CD4-positive, alpha-beta T cell (primary cell): ENCODE measurements at regions of chr11 and their contacts with region 1.

Region 1: GRCh38 chr11:111283945-111284481 is 14.3 kb upstream of the POU2AF3 start:
- DNase-seq: no peak
- ATAC-seq: no peak
- H3K4me3 ChIP-seq: no peak overlapping the region
- H3K4me3 Mint-ChIP-seq: no peak overlapping the region
- H3K27ac ChIP-seq: no peak overlapping the region
- H3K27ac Mint-ChIP-seq: no peak overlapping the region
- H3K4me1 ChIP-seq: no peaks in the 10 kb centered on the region
- H3K4me1 Mint-ChIP-seq: no peaks in the 10 kb centered on the region
- H3K27me3 ChIP-seq: no peaks in the 10 kb centered on the region
- H3K27me3 Mint-ChIP-seq: no peaks in the 10 kb centered on the region
- CTCF ChIP-seq: no peak

Region 2: GRCh38 chr11:110407315-110407714 is 876.7 kb before region 1 on chr11:
- CTCF ChIA-PET with region 1: no interaction called
- POLR2A ChIA-PET with region 1: no interaction called
- intact Hi-C with region 1: no loop called
- DNase-seq: no peak
- ATAC-seq: no peak
- H3K4me3 ChIP-seq: no peak overlapping the region
- H3K4me3 Mint-ChIP-seq: no peak overlapping the region
- H3K27ac ChIP-seq: no peak overlapping the region
- H3K27ac Mint-ChIP-seq: no peak overlapping the region
- H3K4me1 ChIP-seq: no peaks in the 10 kb centered on the region
- H3K4me1 Mint-ChIP-seq: no peaks in the 10 kb centered on the region
- H3K27me3 ChIP-seq: no peaks in the 10 kb centered on the region
- H3K27me3 Mint-ChIP-seq: no peaks in the 10 kb centered on the region
- CTCF ChIP-seq: no peak

Region 3: DNA sequence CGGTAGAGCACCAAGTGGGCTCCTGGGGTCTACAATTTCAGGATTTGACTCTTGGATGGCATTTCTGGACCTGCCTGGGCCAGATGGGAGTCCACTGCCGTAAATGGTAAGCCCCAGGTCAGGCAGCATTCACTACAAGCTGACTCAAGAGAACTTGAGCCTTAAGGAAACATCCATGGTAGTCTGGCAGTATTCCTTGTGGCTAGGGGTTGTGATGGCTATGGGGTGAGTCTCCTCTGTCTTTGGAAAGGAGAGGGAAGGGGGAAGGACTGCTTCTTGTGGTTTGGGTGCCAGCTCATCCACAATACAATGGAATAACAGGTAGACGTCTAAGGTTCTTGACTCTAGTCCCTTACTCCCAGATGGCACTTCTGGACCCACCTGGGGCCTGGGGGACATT is 70.8 kb before region 1 on chr11:
- CTCF ChIA-PET with region 1: no interaction called
- POLR2A ChIA-PET with region 1: no interaction called
- intact Hi-C with region 1: no loop called
- DNase-seq: no peak
- ATAC-seq: no peak
- H3K4me3 ChIP-seq: no peak overlapping the region
- H3K4me3 Mint-ChIP-seq: no peak overlapping the region
- H3K27ac ChIP-seq: no peak overlapping the region
- H3K27ac Mint-ChIP-seq: no peak overlapping the region
- H3K4me1 ChIP-seq: no peaks in the 10 kb centered on the region
- H3K4me1 Mint-ChIP-seq: no peaks in the 10 kb centered on the region
- H3K27me3 ChIP-seq: no peaks in the 10 kb centered on the region
- H3K27me3 Mint-ChIP-seq: peaks cover 11% of the 10 kb centered on the region
- CTCF ChIP-seq: no peak

Region 4: GRCh38 chr11:111246956-111247355 is 37.1 kb before region 1 on chr11:
- CTCF ChIA-PET with region 1: no interaction called
- POLR2A ChIA-PET with region 1: no interaction called
- intact Hi-C with region 1: no loop called
- DNase-seq: no peak
- ATAC-seq: no peak
- H3K4me3 ChIP-seq: no peak overlapping the region
- H3K4me3 Mint-ChIP-seq: no peak overlapping the region
- H3K27ac ChIP-seq: no peak overlapping the region
- H3K27ac Mint-ChIP-seq: no peak overlapping the region
- H3K4me1 ChIP-seq: no peaks in the 10 kb centered on the region
- H3K4me1 Mint-ChIP-seq: no peaks in the 10 kb centered on the region
- H3K27me3 ChIP-seq: peaks cover 5 to 6% of the 10 kb centered on the region in 2 experiments
- H3K27me3 Mint-ChIP-seq: peaks cover 30% of the 10 kb centered on the region
- CTCF ChIP-seq: no peak

Region 5: DNA sequence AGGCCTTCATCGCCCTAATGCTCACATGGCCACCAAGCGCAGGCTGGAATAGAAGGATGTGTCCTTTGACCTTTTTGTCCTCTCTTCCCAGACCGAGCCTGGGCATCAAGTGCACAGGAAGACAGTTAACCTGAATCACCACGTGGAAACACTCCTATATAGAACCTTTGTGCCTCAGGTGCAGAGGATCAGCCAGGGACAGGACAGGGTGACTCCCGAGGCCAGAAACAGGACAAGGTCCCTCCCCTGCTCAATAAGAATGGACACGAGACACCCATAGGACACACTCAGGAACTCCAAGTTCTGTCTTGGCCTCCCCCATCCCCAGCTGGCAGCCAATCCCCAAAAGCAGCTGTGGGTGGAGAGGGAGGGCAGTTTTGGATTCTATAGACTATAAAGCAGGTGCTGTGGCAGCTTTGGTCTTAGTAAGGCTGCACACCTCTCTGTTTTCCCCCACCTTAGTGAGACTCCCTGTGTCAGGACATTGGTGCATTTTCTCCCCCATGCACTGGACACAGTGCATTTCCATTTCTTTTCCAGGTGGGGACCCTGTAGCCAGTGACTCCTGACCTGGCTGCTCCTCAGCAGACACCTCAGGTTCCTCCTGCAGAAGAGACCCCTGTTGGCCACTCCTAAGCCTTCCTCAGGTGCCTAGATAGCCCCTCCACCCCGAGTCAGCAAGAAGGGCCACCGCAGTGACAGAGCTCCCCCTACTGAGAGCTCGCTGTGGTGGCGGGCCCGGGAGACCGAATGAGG is 138.7 kb after region 1 on chr11:
- CTCF ChIA-PET with region 1: interaction called, 9 read pairs
- POLR2A ChIA-PET with region 1: no interaction called
- intact Hi-C with region 1: loop called (anchors 1 kb)
- DNase-seq: peak; percentile 10 to 59 (median 30)
- ATAC-seq: peak; percentile 64
- H3K4me3 ChIP-seq: no peak overlapping the region
- H3K4me3 Mint-ChIP-seq: no peak overlapping the region
- H3K27ac ChIP-seq: no peak overlapping the region
- H3K27ac Mint-ChIP-seq: no peak overlapping the region
- H3K4me1 ChIP-seq: peaks cover 3% of the 10 kb centered on the region
- H3K4me1 Mint-ChIP-seq: peaks cover 6% of the 10 kb centered on the region
- H3K27me3 ChIP-seq: no peaks in the 10 kb centered on the region
- H3K27me3 Mint-ChIP-seq: no peaks in the 10 kb centered on the region
- CTCF ChIP-seq: peak; percentile 66

Region 6: GRCh38 chr11:111429066-111429506 is 145.1 kb after region 1 on chr11:
- CTCF ChIA-PET with region 1: interaction called, 3 read pairs
- POLR2A ChIA-PET with region 1: no interaction called
- intact Hi-C with region 1: loop called in 1 of 2 experiments (anchors 1 kb)
- DNase-seq: peak; percentile 17 to 68 (median 40)
- ATAC-seq: peak; percentile 56
- H3K4me3 ChIP-seq: no peak overlapping the region
- H3K4me3 Mint-ChIP-seq: no peak overlapping the region
- H3K27ac ChIP-seq: no peak overlapping the region
- H3K27ac Mint-ChIP-seq: no peak overlapping the region
- H3K4me1 ChIP-seq: no peaks in the 10 kb centered on the region
- H3K4me1 Mint-ChIP-seq: no peaks in the 10 kb centered on the region
- H3K27me3 ChIP-seq: no peaks in the 10 kb centered on the region
- H3K27me3 Mint-ChIP-seq: no peaks in the 10 kb centered on the region
- CTCF ChIP-seq: peak; percentile 69

Region 7: GRCh38 chr11:111446404-111447111 is 162.5 kb after region 1 on chr11:
- CTCF ChIA-PET with region 1: interaction called, 15 read pairs
- POLR2A ChIA-PET with region 1: interaction called, 8 read pairs
- intact Hi-C with region 1: loop called (anchors 1 kb)
- DNase-seq: peak; percentile 45 to 95 (median 70)
- ATAC-seq: peak; percentile 98
- H3K4me3 ChIP-seq: no peak overlapping the region
- H3K4me3 Mint-ChIP-seq: peak overlapping the region; percentile 34
- H3K27ac ChIP-seq: peak overlapping the region in 1 of 2 donors; percentile 12
- H3K27ac Mint-ChIP-seq: peak overlapping the region; percentile 58
- H3K4me1 ChIP-seq: peaks cover 15% of the 10 kb centered on the region
- H3K4me1 Mint-ChIP-seq: peaks cover 14% of the 10 kb centered on the region
- H3K27me3 ChIP-seq: no peaks in the 10 kb centered on the region
- H3K27me3 Mint-ChIP-seq: no peaks in the 10 kb centered on the region
- CTCF ChIP-seq: peak; percentile 64